GM23248 (cell line): ENCODE measurements at regions of chr1 and their contacts with region 1.

Region 1: DNA sequence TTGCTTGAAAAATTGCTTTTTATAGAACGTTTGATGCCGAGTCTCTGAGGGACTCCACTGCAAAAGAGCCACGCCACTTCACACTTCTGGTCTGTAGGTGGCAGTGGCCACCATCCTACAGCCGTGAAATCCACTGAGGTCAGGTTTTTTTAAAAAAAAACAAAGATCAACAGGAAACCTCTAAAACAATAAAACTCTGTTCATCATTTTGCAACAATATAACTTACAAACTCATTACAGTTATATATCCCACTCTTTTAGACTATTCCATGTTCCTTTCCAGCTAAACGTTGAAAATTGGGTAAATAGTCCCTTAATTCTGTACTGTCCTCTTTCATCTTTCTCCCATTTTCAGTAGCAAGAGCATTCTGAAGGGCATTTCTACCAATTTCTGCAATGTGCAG is 64.6 kb upstream of the FMN2 start:
- DNase-seq: peak; percentile 84
- H3K4me3 ChIP-seq: no peak overlapping the region
- H3K27ac ChIP-seq: no peak overlapping the region
- H3K4me1 ChIP-seq: peaks cover 29% of the 10 kb centered on the region
- H3K27me3 ChIP-seq: no peaks in the 10 kb centered on the region

Region 2: GRCh38 chr1:240149484-240150094 is 122.5 kb after region 1 on chr1:
- in situ Hi-C with region 1: loop called (anchors 10 kb)
- DNase-seq: peak; percentile 57
- H3K4me3 ChIP-seq: no peak overlapping the region
- H3K27ac ChIP-seq: no peak overlapping the region
- H3K4me1 ChIP-seq: peaks cover 27% of the 10 kb centered on the region
- H3K27me3 ChIP-seq: no peaks in the 10 kb centered on the region

Region 3: GRCh38 chr1:240691521-240692338 is 664.7 kb after region 1 on chr1:
- in situ Hi-C with region 1: loop called (anchors 25 kb)
- DNase-seq: peak; percentile 85
- H3K4me3 ChIP-seq: no peak overlapping the region
- H3K27ac ChIP-seq: no peak overlapping the region
- H3K4me1 ChIP-seq: peaks cover 8% of the 10 kb centered on the region
- H3K27me3 ChIP-seq: no peaks in the 10 kb centered on the region